ENCODE measurements at regions of chr16 and their contacts with region 1.

Region 1: DNA sequence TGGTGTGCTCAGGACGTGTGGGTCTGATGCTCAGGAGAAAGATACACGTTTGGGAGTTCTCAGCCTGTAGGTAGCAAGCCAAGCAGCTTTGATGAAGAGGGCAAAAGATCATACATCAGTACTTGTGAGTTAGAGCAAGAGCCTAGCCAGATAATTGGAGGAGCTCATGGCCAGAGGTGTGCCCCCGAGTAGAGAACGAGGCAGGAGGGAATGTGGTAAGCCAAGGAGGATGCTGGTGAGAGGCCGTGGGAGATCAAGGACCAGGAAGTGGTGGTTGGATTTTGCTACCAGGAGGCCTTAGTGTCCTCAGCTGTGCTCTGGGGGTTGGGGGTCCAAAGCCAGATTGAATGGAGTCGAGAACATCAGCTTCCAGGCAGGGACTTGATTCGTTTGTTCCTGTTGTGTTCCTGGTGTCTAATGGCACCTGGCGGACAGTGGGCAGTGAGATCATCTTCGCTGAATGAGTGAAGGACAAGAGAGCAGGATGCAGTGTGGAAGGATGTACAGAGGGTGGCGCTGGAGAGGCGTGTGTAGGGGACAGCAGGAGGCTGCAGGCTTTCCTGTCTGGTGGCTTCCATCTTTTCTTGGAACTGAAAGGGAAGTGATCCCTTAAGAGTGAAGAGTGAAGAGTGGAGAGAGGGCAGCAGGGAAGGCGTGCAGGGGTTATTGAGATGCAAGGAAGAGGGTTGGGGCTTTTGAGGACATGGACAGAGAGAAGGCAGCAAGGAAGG is 11.6 kb downstream of the FBXL19 start:
- DNase-seq: peak in 1 of 2 experiments; percentile 87
- H3K4me3 ChIP-seq: no peak overlapping the region
- H3K27ac ChIP-seq: peak overlapping the region; percentile 50
- H3K4me1 ChIP-seq: no peaks in the 10 kb centered on the region
- H3K27me3 ChIP-seq: no peaks in the 10 kb centered on the region
- CTCF ChIP-seq: peak; percentile 74 to 97 (median 94)
- EP300 ChIP-seq: no peak
- POLR2A ChIP-seq: no peak
- RAD21 ChIP-seq: peak; percentile 57 to 68

Region 2: DNA sequence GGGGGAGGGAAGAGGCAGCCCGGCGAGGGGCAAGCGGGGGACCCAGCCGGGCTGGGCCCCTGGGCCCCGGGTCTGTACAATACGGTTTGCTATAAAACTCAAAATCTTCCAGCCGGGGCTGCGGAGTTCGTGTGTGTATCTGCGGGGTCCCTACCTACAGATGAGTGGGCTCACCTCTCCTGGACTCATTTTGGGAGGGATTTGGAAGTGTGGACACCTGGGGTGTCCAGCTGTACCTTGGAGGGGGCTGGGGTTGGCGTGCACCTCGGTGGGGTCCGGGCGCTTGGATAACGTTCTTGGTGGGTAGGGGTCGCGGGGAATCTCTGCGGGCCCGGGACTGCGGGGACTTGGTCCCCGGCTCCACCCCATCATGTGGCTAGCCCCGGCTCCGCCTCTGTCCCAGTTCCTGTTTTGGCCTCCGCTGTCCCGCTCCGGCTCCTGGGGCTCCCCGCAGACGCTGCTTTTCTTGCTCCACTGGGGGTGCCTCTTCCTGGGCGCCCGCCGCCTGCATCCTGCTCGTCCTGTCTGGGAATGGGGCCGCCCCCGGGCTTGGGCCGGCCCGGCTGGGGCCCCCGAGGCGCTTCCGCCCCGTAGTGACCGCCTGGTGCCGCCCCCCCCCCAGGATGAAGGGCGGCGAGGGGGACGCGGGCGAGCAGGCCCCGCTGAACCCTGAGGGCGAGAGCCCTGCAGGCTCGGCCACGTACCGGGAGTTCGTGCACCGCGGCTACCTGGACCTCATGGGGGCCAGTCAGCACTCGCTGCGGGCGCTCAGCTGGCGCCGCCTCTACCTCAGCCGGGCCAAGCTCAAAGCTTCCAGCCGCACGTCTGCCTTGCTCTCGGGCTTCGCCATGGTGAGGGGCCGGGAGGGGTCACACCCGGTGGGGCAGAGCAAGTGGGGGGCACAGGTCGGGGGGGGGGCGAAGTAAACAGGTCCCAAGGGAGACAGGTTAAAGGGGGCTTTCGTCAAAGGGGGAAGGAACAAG is 14.0 kb after region 1 on chr16 and contains the start of gene ORAI3:
- CTCF ChIA-PET with region 1: interaction called, 25 read pairs
- POLR2A ChIA-PET with region 1: interaction called, 26 read pairs
- DNase-seq: peak in 1 of 2 experiments; percentile 79
- H3K4me3 ChIP-seq: peak within 1 kb of the TSS; percentile 64 to 98 (median 70)
- H3K27ac ChIP-seq: peak within 1 kb of the TSS; percentile 89
- H3K4me1 ChIP-seq: peaks cover 0 to 31% (median 22%) of the 10 kb centered on the region in 4 experiments; a peak in 6 of 7 replicates
- H3K27me3 ChIP-seq: no peaks in the 10 kb centered on the region
- CTCF ChIP-seq: no peak
- EP300 ChIP-seq: no peak
- POLR2A ChIP-seq: peak; percentile 25 to 76
- RAD21 ChIP-seq: no peak
- total RNA-seq, gene ORAI3: 8.7 and 10.0 TPM in 2 replicates

Region 3: DNA sequence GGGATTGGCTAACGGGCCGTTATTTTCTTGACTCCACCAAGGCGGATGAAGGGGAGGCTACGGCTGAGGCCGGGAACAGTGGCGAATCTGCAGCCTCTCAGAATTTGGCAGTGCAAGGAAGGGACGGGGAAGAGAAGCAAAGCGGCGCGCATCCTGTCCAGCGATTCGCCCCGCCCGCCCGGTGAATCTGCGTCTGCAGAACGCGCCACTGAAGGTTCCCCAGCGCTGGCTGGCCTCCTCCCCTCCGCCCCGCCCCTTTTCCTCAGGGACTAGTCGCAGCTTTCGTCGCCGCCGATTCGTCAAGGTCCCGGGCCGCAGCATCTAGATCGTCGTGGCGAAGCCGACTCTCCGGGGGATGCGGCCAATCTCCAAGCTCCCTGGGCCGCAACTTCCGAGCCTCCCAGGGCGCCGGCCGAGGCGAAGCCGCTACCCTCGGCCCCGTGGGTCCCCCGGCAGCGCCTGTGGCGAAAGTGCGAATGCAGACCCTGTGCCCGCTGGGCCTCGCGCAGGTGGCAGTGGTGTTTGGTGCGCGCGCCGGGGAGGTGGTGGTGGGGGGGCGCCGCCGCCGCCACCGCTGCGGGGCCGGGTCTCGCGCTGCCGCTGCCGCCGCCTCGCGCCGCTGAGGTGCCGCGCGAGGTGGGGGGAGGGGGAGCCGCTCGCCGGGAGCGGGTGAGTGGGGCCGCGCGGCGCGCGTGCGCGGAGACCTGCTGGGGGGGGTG is 22.6 kb after region 1 on chr16 and contains the start of gene SETD1A:
- CTCF ChIA-PET with region 1: interaction called, 25 read pairs
- POLR2A ChIA-PET with region 1: interaction called, 26 read pairs
- DNase-seq: peak in 1 of 2 experiments; percentile 96
- H3K4me3 ChIP-seq: peak within 1 kb of the TSS; percentile 60 to 96 (median 90)
- H3K27ac ChIP-seq: peak within 1 kb of the TSS; percentile 100
- H3K4me1 ChIP-seq: peaks cover 0 to 9% (median 2%) of the 10 kb centered on the region in 4 experiments; a peak in 3 of 7 replicates
- H3K27me3 ChIP-seq: no peaks in the 10 kb centered on the region
- CTCF ChIP-seq: no peak
- EP300 ChIP-seq: peak in 1 of 2 experiments; percentile 98; a peak in 1 of 3 replicates
- POLR2A ChIP-seq: peak in 1 of 2 experiments; percentile 54; a peak in 1 of 3 replicates
- RAD21 ChIP-seq: no peak
- total RNA-seq, gene SETD1A: 29.0 and 29.6 TPM in 2 replicates

Region 4: DNA sequence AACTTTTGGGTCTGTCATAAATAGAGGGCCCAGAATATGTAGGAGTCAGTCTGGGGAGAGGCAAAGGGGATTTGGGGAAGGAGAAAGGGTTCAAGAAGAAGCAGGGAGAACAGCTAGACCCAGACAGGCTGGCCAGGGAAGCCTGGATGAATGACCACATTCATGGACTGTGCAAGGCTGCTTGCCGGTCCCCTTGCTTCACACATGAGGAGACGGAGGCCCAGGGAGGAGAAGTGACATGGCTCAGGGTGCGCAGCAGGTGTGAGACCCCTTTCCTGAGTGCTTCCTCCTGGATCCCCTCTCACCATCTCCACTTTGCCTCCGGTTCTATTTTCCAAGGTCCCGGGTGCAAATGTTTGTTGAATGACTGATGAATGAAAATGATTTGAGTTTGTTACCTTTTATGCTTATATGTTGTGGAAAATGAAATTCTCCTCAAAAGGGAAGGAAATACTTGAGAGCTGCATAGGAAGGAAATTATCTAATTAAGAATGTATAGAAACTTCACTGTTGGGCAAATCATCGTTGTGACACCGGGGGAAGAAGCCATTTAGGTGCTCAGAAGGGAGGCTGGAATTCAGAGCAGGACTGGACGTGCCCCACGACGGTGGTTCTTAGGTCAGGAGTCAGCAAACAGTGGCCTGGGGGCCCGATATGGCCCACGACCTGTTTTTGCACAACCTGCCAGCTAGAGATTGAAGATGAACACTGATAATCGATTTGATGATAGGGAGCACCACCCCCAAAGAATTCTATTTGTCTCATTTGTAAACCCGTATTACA is 325.3 kb after region 1 on chr16:
- CTCF ChIA-PET with region 1: no interaction called
- POLR2A ChIA-PET with region 1: no interaction called
- DNase-seq: no peak
- H3K4me3 ChIP-seq: no peak overlapping the region
- H3K27ac ChIP-seq: no peak overlapping the region
- H3K4me1 ChIP-seq: no peaks in the 10 kb centered on the region; a peak in 1 of 7 replicates
- H3K27me3 ChIP-seq: no peaks in the 10 kb centered on the region
- CTCF ChIP-seq: no peak
- EP300 ChIP-seq: no peak
- POLR2A ChIP-seq: no peak
- RAD21 ChIP-seq: no peak